ENCODE measurements at regions of chr7 and their contacts with region 1.

Region 1: GRCh38 chr7:44797329-44798251 is 1.1 kb downstream of the PPIA start:
- DNase-seq: peak; percentile 77 to 98 (median 88)

Region 2: GRCh38 chr7:44581879-44582603 is 215.5 kb before region 1 on chr7 and contains the start of gene TMED4:
- intact Hi-C with region 1: loop called (anchors 5 kb)
- DNase-seq: peak; percentile 97 to 100 (median 99)

Region 3: GRCh38 chr7:44606450-44607254 is 190.9 kb before region 1 on chr7 and contains the start of gene OGDH:
- intact Hi-C with region 1: loop called (anchors 5 kb)
- DNase-seq: peak; percentile 98 to 100 (median 99)

Region 4: GRCh38 chr7:44748045-44748947 is 49.3 kb before region 1 on chr7 and contains the start of gene ZMIZ2:
- intact Hi-C with region 1: loop called (anchors 2 kb)
- DNase-seq: peak; percentile 89 to 99 (median 94)

Region 5: GRCh38 chr7:44847508-44847920 is 49.9 kb after region 1 on chr7:
- intact Hi-C with region 1: loop called (anchors 2 kb)
- DNase-seq: peak; percentile 73 to 98 (median 81)

Measured in posterior cingulate gyrus (tissue), 11 donors.